Activated B cell treated with CpG ODN at 0.5 μM for 24 hours (primary cell): ENCODE measurements at regions of chr15 and their contacts with region 1.

Region 1: DNA sequence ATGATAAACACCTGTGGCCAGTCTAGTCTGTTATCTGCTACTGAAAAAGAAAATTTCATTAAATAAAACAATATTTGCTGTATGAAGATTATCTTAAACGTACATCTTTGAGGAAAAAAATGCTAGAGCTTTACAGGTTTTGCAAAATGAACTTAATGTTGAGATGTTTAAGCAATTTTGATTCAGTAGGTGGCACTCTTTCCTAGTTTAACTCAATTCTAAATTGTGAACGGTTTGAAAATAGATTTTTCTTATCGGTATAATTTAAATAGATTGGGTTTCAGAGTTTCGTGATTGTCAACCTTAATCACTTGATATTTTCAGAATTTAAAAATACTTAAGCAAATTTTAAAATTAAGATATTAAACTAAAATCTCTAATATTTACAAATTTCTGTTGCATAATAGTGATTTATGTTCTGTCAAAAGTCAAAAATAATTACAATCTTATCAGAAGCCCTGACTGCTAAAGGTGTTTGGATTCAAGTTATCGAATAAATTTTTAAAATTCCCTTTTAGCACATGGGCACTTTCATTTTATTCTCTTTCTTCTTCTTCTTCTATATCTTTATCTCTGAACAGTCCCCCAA is 7.0 kb upstream of the RNF111 start:
- DNase-seq: no peak
- ATAC-seq: no peak
- H3K4me3 Mint-ChIP-seq: peak overlapping the region; percentile 73
- H3K27ac Mint-ChIP-seq: peak overlapping the region; percentile 96
- H3K4me1 Mint-ChIP-seq: peaks cover 62% of the 10 kb centered on the region
- H3K27me3 Mint-ChIP-seq: no peaks in the 10 kb centered on the region
- CTCF ChIP-seq: no peak

Region 2: DNA sequence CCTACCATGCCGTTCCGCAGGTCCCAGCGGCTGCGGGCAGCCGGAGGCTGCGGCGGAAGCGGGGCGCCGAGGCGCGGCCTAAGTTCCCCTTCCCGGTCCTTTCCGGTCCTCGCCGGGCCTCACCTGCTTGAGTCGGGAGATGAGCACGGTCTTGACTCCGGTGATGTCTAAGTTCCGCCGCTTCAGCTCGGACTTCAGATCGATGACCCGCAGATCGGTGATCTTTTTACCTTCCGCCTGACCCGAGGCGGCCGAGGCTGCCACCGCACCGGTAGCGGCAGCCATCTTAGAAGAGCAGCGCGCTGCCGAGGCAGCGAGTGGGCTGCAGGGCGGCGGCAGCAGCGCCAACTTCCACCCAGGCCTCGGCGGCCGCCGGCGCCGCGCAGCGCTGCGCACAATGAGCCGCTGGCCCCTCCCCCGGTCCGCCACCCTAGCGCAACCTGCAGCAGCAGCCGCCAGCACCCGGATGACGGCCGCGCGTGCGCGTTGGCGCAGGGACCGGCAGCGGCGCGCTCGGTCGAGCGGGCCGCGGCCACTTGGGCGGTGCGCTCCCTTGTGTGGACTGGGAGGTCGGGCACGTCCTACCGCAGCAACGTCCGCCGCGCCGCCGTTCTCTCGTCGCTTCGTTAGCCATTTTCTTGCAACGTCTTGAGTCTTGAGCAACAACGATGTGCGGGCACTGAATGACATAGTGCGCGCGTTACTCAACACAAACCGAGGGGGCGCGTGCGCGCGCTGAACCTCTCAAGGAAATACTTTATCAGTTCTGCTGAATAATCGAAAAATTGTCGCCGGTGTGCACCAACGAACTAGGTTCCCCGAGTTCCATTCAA is 46.9 kb before region 1 on chr15 and contains the start of gene SLTM:
- CTCF ChIA-PET with region 1: interaction called, 3 read pairs
- POLR2A ChIA-PET with region 1: interaction called, 5 read pairs
- intact Hi-C with region 1: loop called (anchors 1 kb)
- DNase-seq: peak; percentile 87
- ATAC-seq: peak; percentile 91
- H3K4me3 Mint-ChIP-seq: peak within 1 kb of the TSS; percentile 99
- H3K27ac Mint-ChIP-seq: peak within 1 kb of the TSS; percentile 100
- H3K4me1 Mint-ChIP-seq: peaks cover 29% of the 10 kb centered on the region
- H3K27me3 Mint-ChIP-seq: no peaks in the 10 kb centered on the region
- CTCF ChIP-seq: no peak
- total RNA-seq, gene SLTM: 124 and 159 TPM in 2 replicates

Region 3: GRCh38 chr15:59051873-59052861 is 71.7 kb after region 1 on chr15:
- CTCF ChIA-PET with region 1: interaction called, 7 read pairs
- POLR2A ChIA-PET with region 1: no interaction called
- intact Hi-C with region 1: loop called (anchors 1 kb)
- DNase-seq: no peak
- ATAC-seq: no peak
- H3K4me3 Mint-ChIP-seq: no peak overlapping the region
- H3K27ac Mint-ChIP-seq: peak overlapping the region; percentile 50
- H3K4me1 Mint-ChIP-seq: peaks cover 11% of the 10 kb centered on the region
- H3K27me3 Mint-ChIP-seq: no peaks in the 10 kb centered on the region
- CTCF ChIP-seq: no peak

Region 4: GRCh38 chr15:59174835-59175831 is 194.7 kb after region 1 on chr15:
- CTCF ChIA-PET with region 1: interaction called, 5 read pairs
- POLR2A ChIA-PET with region 1: no interaction called
- intact Hi-C with region 1: loop called (anchors 1 kb)
- DNase-seq: no peak
- ATAC-seq: peak; percentile 99
- H3K4me3 Mint-ChIP-seq: no peak overlapping the region
- H3K27ac Mint-ChIP-seq: peak overlapping the region; percentile 20
- H3K4me1 Mint-ChIP-seq: peaks cover 15% of the 10 kb centered on the region
- H3K27me3 Mint-ChIP-seq: no peaks in the 10 kb centered on the region
- CTCF ChIP-seq: no peak

Region 5: GRCh38 chr15:59299929-59300617 is 319.6 kb after region 1 on chr15:
- CTCF ChIA-PET with region 1: no interaction called
- POLR2A ChIA-PET with region 1: interaction called, 3 read pairs
- intact Hi-C with region 1: loop called (anchors 5 kb)
- DNase-seq: peak; percentile 58
- ATAC-seq: peak; percentile 76
- H3K4me3 Mint-ChIP-seq: peak overlapping the region; percentile 71
- H3K27ac Mint-ChIP-seq: peak overlapping the region; percentile 94
- H3K4me1 Mint-ChIP-seq: peaks cover 93% of the 10 kb centered on the region
- H3K27me3 Mint-ChIP-seq: no peaks in the 10 kb centered on the region
- CTCF ChIP-seq: no peak

Region 6: GRCh38 chr15:59492389-59493377 is 512.2 kb after region 1 on chr15:
- CTCF ChIA-PET with region 1: interaction called, 15 read pairs
- POLR2A ChIA-PET with region 1: interaction called, 4 read pairs
- intact Hi-C with region 1: loop called (anchors 1 kb)
- DNase-seq: peak; percentile 31
- ATAC-seq: peak; percentile 93
- H3K4me3 Mint-ChIP-seq: no peak overlapping the region
- H3K27ac Mint-ChIP-seq: peak overlapping the region; percentile 1
- H3K4me1 Mint-ChIP-seq: peaks cover 10% of the 10 kb centered on the region
- H3K27me3 Mint-ChIP-seq: no peaks in the 10 kb centered on the region
- CTCF ChIP-seq: peak; percentile 87

Region 7: GRCh38 chr15:59933607-59934006 is 953.2 kb after region 1 on chr15:
- CTCF ChIA-PET with region 1: no interaction called
- POLR2A ChIA-PET with region 1: no interaction called
- intact Hi-C with region 1: no loop called
- DNase-seq: no peak
- ATAC-seq: no peak
- H3K4me3 Mint-ChIP-seq: no peak overlapping the region
- H3K27ac Mint-ChIP-seq: no peak overlapping the region
- H3K4me1 Mint-ChIP-seq: no peaks in the 10 kb centered on the region
- H3K27me3 Mint-ChIP-seq: peaks cover 13% of the 10 kb centered on the region
- CTCF ChIP-seq: no peak